Sigmoid colon (tissue), 7 donors: ENCODE measurements at regions of chr17 and their contacts with region 1.

Region 1: DNA sequence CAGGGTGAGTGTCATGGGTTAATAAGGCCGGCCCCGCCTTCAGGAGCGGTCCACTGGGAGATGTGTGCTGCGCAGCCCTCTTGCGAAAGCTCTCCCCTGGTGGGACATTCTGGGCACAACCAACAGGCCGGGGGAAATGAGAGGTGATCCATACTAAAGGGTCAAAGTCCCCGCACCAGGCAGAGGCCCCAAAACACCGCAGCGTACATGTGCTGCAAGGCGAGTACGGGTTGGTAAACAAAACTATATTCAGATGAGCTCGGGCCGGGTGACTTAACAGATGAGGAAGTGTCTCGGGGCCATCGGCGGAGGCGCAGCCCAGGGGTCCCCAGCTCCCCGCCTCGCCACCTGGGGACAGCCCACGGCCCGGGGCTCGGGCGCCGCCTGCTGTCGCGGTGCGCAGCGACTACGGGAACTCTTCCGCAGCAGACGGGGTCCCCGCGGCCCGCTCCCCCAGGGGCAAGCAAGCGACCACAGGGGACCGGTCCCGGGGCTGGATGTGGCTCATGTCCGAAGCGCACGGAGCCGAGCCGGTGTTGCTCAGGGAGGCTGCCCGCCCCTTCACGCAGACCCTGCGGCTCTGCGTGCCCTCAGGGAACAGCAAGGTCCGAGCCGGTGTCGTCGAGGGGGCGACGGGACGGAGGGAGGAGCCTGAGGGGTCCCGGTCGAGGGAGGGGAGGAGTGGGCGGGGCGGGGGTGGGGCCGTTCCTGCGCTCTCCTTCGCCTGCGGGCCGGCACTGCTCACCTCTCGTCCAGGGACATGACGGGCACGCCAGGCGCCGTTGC is at the start of gene RAB37:
- DNase-seq: no peak
- H3K4me3 ChIP-seq: peak within 1 kb of the TSS in 3 of 4 donors; percentile 16 to 28 (median 24)
- H3K27ac ChIP-seq: peak within 1 kb of the TSS in 1 of 4 donors; percentile 65
- H3K4me1 ChIP-seq: peaks cover 0 to 24% (median 17%) of the 10 kb centered on the region in 4 donors
- H3K27me3 ChIP-seq: peaks cover 22 to 94% (median 59%) of the 10 kb centered on the region in 3 donors
- CTCF ChIP-seq: peak in 1 of 4 experiments; percentile 21
- EP300 ChIP-seq: no peak
- POLR2A ChIP-seq: no peak
- total RNA-seq, gene RAB37: 0.54 to 4.1 (median 1.4) TPM

Region 2: DNA sequence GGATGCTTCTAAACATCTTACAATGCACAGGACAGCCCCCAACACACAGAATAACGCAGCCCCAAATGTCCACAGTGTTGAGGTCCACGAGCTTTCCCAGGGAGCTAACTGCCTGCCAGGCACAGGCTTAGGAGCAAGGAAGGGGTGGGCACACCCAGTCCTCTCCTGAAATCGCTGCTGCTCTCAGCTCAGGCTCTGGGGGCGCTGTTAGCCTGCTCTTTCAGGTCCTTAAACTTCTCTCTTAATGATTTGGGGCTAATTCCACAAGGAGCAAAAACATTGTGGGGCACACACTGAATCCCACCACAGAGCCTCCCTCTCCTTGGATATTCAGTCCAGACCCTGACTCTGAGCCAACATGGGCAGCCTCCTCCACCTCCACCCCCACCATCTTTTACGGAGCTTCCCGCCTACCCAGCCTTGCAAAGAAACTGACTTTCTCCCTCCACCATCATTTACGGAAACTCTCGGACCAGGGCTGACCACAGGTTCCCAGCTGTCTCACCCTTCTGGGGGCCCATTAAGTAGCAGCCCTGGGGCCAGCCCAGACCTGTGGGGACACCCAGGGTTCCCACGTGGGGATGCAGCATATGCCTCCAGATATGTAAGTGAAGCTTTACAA is 170.5 kb before region 1 on chr17:
- intact Hi-C with region 1: loop called (anchors 10 kb)
- DNase-seq: no peak
- H3K4me3 ChIP-seq: no peak overlapping the region
- H3K27ac ChIP-seq: no peak overlapping the region
- H3K4me1 ChIP-seq: no peaks in the 10 kb centered on the region
- H3K27me3 ChIP-seq: peaks cover 0 to 13% (median 0%) of the 10 kb centered on the region in 3 donors
- CTCF ChIP-seq: peak in 3 of 4 experiments; percentile 12 to 40 (median 33)
- EP300 ChIP-seq: no peak
- POLR2A ChIP-seq: no peak

Region 3: DNA sequence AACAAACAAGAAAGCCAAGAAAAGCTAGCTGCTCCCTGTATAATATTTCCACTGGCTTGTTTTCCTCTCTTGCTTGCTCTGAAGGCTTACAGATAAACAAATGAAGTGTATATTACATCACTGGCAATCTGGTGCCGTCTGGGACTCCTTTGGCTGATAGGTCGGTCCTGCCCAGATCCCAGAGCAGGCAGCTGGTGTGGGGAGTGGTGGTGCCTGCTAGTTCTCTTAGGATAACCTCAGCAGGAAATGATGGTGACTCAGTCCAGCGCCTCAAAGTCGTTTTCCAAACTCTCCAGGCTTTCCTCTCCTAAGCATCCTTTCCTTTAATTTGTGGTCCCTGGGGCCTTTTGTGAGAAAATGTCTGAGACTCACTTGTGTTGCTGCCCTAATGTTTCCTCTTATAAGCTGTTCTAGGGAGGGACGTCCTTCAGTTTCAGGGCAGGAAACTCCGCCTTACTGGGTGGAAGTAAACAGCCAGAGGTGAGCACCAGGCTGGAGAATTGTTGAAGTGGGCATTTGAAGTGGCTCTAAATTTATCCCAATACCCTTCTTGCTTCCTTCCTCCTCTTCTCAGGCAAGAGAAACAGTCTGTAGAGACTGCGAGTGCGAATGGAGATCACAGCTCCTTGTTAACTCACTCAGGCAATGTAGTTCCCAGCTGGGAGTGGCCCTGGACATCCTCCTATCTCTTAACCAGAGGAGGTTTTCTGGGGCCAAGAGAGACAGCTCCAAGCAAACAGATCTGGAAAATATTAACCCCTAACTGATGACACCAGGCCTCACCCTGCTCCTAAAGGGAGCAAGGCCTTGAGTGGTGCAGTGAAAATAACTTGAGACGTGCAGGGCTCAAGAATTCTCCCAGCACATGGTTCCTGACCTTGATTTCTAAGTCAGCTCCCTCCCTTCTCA is 58.9 kb before region 1 on chr17:
- intact Hi-C with region 1: no loop called
- DNase-seq: no peak
- H3K4me3 ChIP-seq: no peak overlapping the region
- H3K27ac ChIP-seq: peak overlapping the region in 1 of 4 donors; percentile 15
- H3K4me1 ChIP-seq: no peaks in the 10 kb centered on the region
- H3K27me3 ChIP-seq: peaks cover 0 to 19% (median 0%) of the 10 kb centered on the region in 3 donors
- CTCF ChIP-seq: no peak
- EP300 ChIP-seq: no peak
- POLR2A ChIP-seq: no peak

Region 4: DNA sequence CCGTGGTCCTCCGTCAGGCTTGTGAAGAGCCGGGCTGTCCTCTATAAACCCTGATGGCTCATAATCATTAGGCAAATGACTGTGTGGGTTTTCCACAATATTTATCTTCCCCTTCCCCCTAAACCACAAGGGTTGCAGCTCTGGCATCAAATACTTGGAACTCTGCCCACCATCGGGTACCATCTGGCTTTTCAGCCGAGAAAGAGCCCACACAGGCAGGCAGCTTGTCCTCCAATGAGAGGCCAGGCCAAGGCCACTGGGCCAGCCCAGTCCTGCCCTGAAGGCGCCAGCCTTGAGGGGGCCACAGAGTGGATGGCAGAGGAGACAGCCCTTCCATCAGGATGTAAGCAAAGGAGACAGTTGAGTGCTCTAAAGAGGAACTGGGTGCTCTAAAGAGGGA is 71.2 kb after region 1 on chr17:
- intact Hi-C with region 1: no loop called
- DNase-seq: no peak
- H3K4me3 ChIP-seq: no peak overlapping the region
- H3K27ac ChIP-seq: no peak overlapping the region
- H3K4me1 ChIP-seq: peaks cover 0 to 28% (median 23%) of the 10 kb centered on the region in 4 donors
- H3K27me3 ChIP-seq: no peaks in the 10 kb centered on the region
- CTCF ChIP-seq: no peak
- EP300 ChIP-seq: no peak
- POLR2A ChIP-seq: no peak